Psoas muscle (tissue), 8 donors: ENCODE measurements at regions of chr9 and their contacts with region 1.

Region 1: DNA sequence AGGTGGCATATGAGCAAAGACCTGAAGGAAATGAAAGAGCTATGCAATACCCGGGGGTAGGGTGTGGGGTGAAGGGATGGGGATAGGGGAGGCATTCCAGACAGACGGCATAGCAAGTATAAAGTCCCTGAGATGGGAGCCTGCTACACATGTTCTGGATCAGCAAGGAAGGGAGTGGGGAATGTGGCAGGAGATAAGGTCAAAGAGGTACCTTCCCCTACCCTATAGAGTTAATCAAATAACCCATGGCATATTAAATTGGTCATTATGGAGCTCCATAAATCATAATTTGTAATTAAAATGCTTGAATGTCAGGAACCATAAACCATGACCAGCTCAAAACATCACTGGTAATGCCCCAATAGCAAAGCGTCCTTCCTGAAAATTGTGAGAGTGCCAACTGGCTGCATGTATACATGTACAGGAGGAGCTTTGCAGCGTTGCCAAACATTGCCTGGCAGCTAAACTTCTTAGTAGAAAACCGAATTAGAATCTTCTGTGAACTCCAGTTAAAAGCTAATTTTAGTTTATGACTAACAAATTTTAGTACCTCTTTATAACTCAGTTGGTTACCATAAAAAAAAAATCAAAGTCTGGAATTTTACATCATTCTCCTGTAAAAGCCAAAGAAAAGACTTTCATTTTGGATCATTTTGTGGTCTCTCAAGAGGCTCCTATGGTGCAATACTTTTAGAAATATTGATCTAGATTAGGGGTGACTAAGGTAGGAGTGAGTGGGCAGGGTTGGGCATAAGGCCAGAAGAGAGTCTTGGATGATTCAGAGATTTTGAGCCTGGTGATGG is 4.7 kb downstream of the DNAI1 start:
- DNase-seq: no peak
- ATAC-seq: no peak
- H3K4me3 ChIP-seq: no peak overlapping the region
- H3K27ac ChIP-seq: no peak overlapping the region
- H3K4me1 ChIP-seq: peaks cover 45% of the 10 kb centered on the region
- H3K27me3 ChIP-seq: no peaks in the 10 kb centered on the region
- CTCF ChIP-seq: no peak

Region 2: DNA sequence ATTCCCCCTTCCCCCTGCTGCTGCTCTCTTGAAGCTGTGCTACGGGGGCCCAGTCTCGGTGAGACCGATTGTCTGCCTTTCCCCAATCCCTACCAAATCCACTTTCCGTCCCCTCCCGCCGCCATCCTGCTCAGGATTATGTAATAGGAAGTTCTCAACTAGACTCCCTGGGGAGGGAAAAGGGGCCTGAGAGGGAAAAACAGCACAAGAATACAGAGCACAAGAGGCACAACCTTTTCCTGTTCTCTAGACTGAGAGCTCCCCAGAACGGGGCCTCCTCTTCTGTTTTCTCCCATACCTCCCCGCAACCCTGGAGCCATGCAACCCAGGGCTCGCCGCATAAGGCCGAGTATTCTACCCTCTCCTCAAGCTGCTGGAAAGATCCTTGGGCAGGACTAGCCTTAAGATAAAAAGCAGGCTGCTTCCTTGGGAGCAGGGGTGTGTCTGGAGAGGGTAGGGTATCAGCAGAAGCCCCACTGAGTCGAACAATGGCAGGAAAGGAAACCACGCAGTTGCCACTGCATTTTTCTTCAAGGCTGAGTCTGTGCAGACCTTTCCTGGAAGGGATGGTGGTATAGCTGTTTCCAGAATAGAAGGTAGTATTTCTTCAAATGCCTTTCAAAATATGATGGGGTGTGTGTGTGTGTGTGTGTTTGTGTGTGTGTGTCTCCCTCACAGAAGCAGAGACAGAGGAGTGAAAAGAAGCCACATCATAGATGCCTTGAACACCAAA is 99.5 kb before region 1 on chr9:
- intact Hi-C with region 1: no loop called
- DNase-seq: peak in 1 of 2 donors; percentile 63
- ATAC-seq: peak in 2 of 4 donors; percentile 22 to 67
- H3K4me3 ChIP-seq: no peak overlapping the region
- H3K27ac ChIP-seq: peak overlapping the region; percentile 51
- H3K4me1 ChIP-seq: peaks cover 13% of the 10 kb centered on the region
- H3K27me3 ChIP-seq: no peaks in the 10 kb centered on the region
- CTCF ChIP-seq: no peak

Region 3: DNA sequence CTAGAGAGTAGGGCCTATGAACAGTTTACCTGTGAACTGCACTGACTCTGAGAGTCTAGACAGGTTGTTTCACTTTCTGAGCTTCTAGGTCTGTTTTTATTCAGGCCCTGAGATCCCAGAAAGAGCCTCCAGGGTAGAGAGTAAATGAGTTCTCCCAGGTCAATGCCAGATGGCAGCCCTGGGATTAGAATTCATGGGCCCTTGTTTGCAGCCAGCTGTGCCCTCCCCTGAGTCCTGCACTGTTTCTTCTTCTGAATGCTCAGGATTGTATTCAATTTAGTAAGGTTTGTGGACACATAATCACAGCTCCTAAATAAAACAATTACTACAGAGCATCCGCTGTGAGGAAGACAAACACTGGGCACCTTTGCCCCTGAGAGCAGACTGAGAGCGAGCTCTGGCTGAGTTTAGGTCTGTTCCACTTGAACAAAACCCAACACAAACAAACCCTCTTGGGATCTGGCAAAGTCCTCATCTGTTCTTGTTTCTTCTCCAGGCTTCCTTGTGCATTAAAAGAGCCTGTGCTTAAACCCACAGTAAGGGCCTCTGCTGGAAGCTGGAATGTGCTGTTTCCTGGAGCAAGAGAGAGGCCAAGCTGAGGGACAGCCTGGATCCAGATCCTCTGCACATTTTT is 34.9 kb before region 1 on chr9:
- intact Hi-C with region 1: loop called in 1 of 2 experiments (anchors 5 kb)
- DNase-seq: no peak
- ATAC-seq: no peak
- H3K4me3 ChIP-seq: no peak overlapping the region
- H3K27ac ChIP-seq: no peak overlapping the region
- H3K4me1 ChIP-seq: peaks cover 29% of the 10 kb centered on the region
- H3K27me3 ChIP-seq: no peaks in the 10 kb centered on the region
- CTCF ChIP-seq: no peak

Region 4: GRCh38 chr9:34546834-34547827 is 83.8 kb after region 1 on chr9:
- intact Hi-C with region 1: no loop called
- DNase-seq: peak; percentile 63 to 80
- ATAC-seq: peak; percentile 54 to 66 (median 58)
- H3K4me3 ChIP-seq: no peak overlapping the region
- H3K27ac ChIP-seq: no peak overlapping the region
- H3K4me1 ChIP-seq: no peaks in the 10 kb centered on the region
- H3K27me3 ChIP-seq: peaks cover 0 to 4% (median 0%) of the 10 kb centered on the region in 3 donors
- CTCF ChIP-seq: peak; percentile 59

Region 5: GRCh38 chr9:34603610-34604231 is 140.4 kb after region 1 on chr9:
- intact Hi-C with region 1: no loop called
- DNase-seq: peak; percentile 82 to 92
- ATAC-seq: peak; percentile 91 to 96 (median 94)
- H3K4me3 ChIP-seq: no peak overlapping the region
- H3K27ac ChIP-seq: no peak overlapping the region
- H3K4me1 ChIP-seq: peaks cover 6% of the 10 kb centered on the region
- H3K27me3 ChIP-seq: no peaks in the 10 kb centered on the region
- CTCF ChIP-seq: peak; percentile 92